Activated naive CD4-positive, alpha-beta T cell treated with anti-CD3 and anti-CD28 coated beads, Interleukin-2, amount 10 ng/mL, durations not matched to agents 7 days and 5 days (primary cell): ENCODE measurements at regions of chr6 and their contacts with region 1.

Region 1: GRCh38 chr6:70686548-70687133 is 19.0 kb downstream of the SMAP1 start:
- DNase-seq: no peak
- H3K4me3 Mint-ChIP-seq: no peak overlapping the region
- H3K27ac Mint-ChIP-seq: no peak overlapping the region
- H3K4me1 Mint-ChIP-seq: peaks cover 45% of the 10 kb centered on the region
- H3K27me3 Mint-ChIP-seq: no peaks in the 10 kb centered on the region

Region 2: DNA sequence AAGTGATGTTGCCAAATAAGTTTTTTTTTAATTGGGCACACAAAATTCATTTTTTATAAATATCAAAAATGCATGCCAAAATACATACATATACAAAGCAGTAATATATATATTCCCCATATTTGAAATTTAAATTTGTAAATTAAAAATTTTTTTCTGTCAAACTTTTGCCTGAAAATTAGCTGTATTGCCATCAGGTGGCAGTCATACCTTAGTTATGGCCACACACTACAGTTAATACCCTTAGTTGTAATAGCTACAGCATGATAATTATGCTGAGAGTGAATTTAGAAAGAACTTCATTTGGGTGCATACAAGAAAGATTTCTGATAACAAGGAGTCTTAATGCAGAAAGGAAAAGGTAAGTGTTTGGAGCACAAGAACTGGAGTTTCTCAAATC is 166.1 kb before region 1 on chr6:
- CTCF ChIA-PET with region 1: interaction called, 46 read pairs
- DNase-seq: no peak
- H3K4me3 Mint-ChIP-seq: no peak overlapping the region
- H3K27ac Mint-ChIP-seq: no peak overlapping the region
- H3K4me1 Mint-ChIP-seq: peaks cover 15% of the 10 kb centered on the region
- H3K27me3 Mint-ChIP-seq: no peaks in the 10 kb centered on the region

Region 3: DNA sequence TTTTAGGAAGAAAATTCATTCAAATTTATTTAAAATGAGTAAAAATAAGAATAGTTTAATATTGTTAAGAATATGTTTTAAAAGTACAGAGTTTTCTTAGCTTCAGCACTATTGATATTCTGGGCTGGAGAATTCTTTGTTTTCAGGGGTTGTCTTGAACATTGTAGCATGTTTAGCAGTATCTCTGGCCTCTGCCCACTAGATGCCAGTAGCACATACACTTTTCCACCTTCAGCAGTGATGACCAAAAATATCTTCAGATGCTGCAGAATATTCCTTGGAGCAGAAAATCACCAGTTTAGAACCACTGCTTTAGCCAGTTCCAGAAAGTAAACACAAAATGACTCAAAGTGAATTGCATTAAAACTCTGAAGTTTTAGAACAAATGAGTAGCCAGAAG is 139.3 kb before region 1 on chr6:
- CTCF ChIA-PET with region 1: interaction called, 40 read pairs
- DNase-seq: peak; percentile 49
- H3K4me3 Mint-ChIP-seq: no peak overlapping the region
- H3K27ac Mint-ChIP-seq: no peak overlapping the region
- H3K4me1 Mint-ChIP-seq: no peaks in the 10 kb centered on the region
- H3K27me3 Mint-ChIP-seq: no peaks in the 10 kb centered on the region

Region 4: DNA sequence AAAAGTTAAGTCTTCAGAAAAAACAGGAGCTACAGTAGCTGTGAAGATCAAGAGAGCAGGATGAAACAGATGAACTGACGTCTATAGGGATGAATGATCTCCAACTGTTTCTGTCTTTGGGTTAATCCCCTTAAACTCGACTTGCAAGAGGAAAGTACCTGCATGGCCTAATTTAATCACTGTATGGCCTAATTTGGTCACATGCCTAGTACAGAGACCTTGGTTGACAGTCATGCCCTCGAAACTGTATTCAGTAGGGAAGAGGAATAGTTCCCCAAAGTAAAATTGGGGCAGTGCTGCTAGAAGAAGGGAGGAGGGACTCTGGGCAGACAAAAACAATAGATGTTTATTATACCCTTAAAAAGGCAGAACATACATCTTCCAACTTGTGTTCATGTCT is 28.9 kb before region 1 on chr6:
- CTCF ChIA-PET with region 1: no interaction called
- DNase-seq: no peak
- H3K4me3 Mint-ChIP-seq: no peak overlapping the region
- H3K27ac Mint-ChIP-seq: no peak overlapping the region
- H3K4me1 Mint-ChIP-seq: peaks cover 7% of the 10 kb centered on the region
- H3K27me3 Mint-ChIP-seq: peaks cover 10% of the 10 kb centered on the region

Region 5: DNA sequence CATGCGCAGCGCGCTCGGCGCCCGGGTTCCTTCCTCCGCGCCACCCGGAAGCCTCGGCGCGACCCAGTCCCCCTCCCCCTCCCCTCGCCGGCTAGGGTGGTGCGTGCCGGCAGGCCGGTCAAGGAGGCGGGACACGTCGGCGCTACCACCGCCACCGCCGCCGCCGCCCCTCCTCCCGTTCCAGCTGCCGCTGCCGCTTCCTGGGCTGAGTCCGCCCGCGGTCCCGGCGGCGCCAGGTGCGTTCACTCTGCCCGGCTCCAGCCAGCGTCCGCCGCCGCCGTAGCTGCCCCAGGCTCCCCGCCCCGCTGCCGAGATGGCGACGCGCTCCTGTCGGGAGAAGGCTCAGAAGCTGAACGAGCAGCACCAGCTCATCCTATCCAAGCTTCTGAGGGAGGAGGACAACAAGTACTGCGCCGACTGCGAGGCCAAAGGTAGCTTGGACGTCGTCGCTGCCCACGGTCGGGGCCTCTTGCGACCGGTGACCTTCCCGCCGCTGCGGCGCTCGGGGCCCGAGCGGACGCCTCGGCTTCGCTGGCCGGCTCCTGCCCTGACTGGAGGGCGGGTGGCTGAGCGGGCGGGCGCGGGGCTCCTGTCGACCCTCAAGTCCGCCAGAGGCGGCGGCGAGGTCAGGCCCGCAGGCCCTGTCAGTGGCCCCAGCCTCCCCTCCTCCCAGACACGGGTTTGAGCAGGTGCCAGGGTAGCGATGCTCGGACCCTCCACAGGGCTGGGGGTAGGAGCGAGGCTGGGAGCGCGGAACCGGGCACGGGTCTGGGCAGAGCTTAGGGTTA is 18.7 kb before region 1 on chr6 and contains the start of gene SMAP1:
- CTCF ChIA-PET with region 1: interaction called, 23 read pairs
- DNase-seq: peak; percentile 95
- H3K4me3 Mint-ChIP-seq: peak within 1 kb of the TSS; percentile 95
- H3K27ac Mint-ChIP-seq: peak within 1 kb of the TSS; percentile 88
- H3K4me1 Mint-ChIP-seq: peaks cover 55% of the 10 kb centered on the region
- H3K27me3 Mint-ChIP-seq: no peaks in the 10 kb centered on the region

Region 6: GRCh38 chr6:70673054-70673453 is 13.6 kb before region 1 on chr6:
- CTCF ChIA-PET with region 1: interaction called, 23 read pairs
- DNase-seq: no peak
- H3K4me3 Mint-ChIP-seq: no peak overlapping the region
- H3K27ac Mint-ChIP-seq: no peak overlapping the region
- H3K4me1 Mint-ChIP-seq: peaks cover 63% of the 10 kb centered on the region
- H3K27me3 Mint-ChIP-seq: no peaks in the 10 kb centered on the region

Region 7: DNA sequence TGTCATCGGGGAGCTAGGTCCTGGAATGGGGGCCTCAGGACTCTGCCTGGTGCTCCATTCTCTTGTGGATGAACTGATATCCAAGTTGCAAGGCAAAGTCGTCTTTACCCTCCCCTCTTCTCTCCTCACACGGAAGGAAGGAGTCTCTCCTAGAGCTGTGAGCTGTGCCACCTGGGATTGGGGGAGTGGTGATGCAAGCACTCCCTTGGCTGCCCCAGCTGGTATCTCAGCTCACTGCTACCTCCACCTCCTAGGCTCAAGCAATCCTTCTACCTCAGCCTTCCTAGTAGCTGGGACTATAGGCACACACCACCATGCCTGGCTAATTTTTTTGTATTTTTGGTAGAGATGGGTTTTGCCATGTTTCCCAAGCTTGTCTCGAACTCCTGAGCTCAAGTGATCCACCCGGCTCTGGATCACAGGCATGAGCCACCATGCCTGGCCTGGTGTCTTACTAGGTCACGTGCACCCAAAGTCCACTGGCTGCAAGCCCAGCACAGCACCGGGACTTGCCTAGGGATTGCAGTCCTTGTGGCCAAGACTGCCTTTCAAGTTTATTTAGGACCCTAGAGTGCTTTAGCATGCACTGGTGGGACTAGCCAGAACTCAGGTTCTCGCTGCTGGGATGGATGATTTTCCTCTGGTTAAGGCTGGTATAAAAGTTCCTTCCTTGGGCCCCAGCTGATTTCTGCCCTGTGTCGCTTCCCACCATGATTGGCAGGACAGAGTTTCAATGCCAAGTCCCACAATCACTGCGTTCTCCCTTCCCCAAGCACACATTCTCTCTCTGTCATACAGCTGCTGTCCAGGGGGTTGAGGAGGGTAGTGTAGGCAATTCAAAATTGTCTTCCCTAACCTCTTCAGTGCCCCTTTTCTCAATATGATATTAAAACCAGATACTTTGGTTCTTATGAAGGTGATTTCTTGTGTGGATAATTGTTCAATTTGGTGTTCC is 14.6 kb after region 1 on chr6:
- CTCF ChIA-PET with region 1: interaction called, 12 read pairs
- DNase-seq: no peak
- H3K4me3 Mint-ChIP-seq: no peak overlapping the region
- H3K27ac Mint-ChIP-seq: peak overlapping the region; percentile 33
- H3K4me1 Mint-ChIP-seq: no peaks in the 10 kb centered on the region
- H3K27me3 Mint-ChIP-seq: no peaks in the 10 kb centered on the region